ENCODE measurements at regions of chr14 and their contacts with region 1.

Region 1: GRCh38 chr14:56299306-56299984 is 181.2 kb downstream of the PELI2 start:
- DNase-seq: no peak
- H3K4me3 ChIP-seq: no peak overlapping the region
- H3K27ac ChIP-seq: no peak overlapping the region
- H3K4me1 ChIP-seq: no peaks in the 10 kb centered on the region
- H3K27me3 ChIP-seq: no peaks in the 10 kb centered on the region

Region 2: GRCh38 chr14:56280843-56281242 is 18.6 kb before region 1 on chr14:
- CTCF ChIA-PET with region 1: interaction called, 10 read pairs
- POLR2A ChIA-PET with region 1: no interaction called
- DNase-seq: peak; percentile 6 to 16 (median 12)
- H3K4me3 ChIP-seq: no peak overlapping the region
- H3K27ac ChIP-seq: no peak overlapping the region
- H3K4me1 ChIP-seq: peaks cover 0 to 6% (median 5%) of the 10 kb centered on the region in 4 experiments
- H3K27me3 ChIP-seq: no peaks in the 10 kb centered on the region